A673 (cell line): ENCODE measurements at regions of chr3 and their contacts with region 1.

Region 1: GRCh38 chr3:19348929-19349564 is 200.7 kb downstream of the KCNH8 start:
- DNase-seq: peak; percentile 17
- H3K4me3 ChIP-seq: no peak overlapping the region
- H3K27ac ChIP-seq: no peak overlapping the region
- H3K4me1 ChIP-seq: no peaks in the 10 kb centered on the region
- H3K27me3 ChIP-seq: no peaks in the 10 kb centered on the region
- CTCF ChIP-seq: peak; percentile 72

Region 2: DNA sequence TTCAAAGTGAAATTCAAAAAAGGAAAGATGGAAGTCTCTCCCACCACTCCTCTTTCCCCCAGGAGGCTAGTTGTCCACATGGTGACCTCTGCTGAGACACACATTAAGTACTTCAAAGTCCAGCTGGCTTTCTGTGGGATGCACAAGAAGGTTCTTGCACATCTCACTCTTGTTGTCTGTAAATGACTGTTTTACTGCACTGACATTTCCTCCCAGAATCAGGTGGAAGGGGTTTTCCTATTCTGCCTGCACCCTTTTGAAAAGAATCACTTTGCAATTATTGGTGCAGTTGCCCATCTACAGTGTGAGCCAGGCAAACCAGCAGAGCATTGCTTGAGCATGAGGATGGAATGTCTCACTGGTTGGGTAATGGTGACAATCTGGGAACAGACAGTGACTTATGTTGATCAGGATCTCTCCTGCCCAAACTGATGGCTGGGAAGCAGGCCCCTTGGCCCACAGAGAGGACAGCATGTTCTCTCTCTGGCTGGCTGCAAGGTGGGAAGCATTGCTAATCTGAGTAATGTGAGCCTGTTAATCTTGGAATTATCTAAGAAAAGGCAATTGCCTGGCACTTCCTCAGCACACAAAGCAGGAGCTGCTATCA is 576.2 kb before region 1 on chr3:
- CTCF ChIA-PET with region 1: no interaction called
- POLR2A ChIA-PET with region 1: no interaction called
- intact Hi-C with region 1: no loop called
- DNase-seq: no peak
- H3K4me3 ChIP-seq: no peak overlapping the region
- H3K27ac ChIP-seq: no peak overlapping the region
- H3K4me1 ChIP-seq: no peaks in the 10 kb centered on the region
- H3K27me3 ChIP-seq: no peaks in the 10 kb centered on the region
- CTCF ChIP-seq: no peak

Region 3: DNA sequence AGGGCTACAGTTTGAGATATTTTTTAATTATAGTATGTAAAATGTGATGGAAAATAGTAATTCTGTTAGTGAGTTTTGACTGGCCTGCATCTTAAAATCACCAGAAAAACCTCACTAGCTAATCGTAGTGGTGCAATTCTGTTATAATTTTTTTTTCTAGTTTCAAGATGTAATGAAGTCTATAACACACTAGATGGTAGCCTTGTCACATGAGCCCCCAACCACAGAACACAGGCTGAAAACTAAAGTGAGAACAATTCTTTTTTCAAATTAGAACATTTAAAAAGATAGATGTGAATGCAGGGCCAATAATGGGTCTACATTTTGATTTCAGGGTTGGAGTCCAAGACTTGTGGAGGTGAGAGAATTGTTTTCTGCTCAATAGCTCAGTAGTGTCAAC is 284.0 kb before region 1 on chr3:
- CTCF ChIA-PET with region 1: no interaction called
- POLR2A ChIA-PET with region 1: no interaction called
- intact Hi-C with region 1: loop called (anchors 5 kb)
- DNase-seq: peak; percentile 3
- H3K4me3 ChIP-seq: no peak overlapping the region
- H3K27ac ChIP-seq: no peak overlapping the region
- H3K4me1 ChIP-seq: no peaks in the 10 kb centered on the region
- H3K27me3 ChIP-seq: no peaks in the 10 kb centered on the region
- CTCF ChIP-seq: peak; percentile 29; the same call in 1 of the 2 replicates

Region 4: GRCh38 chr3:19543212-19543841 is 194.3 kb after region 1 on chr3:
- CTCF ChIA-PET with region 1: no interaction called
- POLR2A ChIA-PET with region 1: no interaction called
- intact Hi-C with region 1: loop called (anchors 5 kb)
- DNase-seq: peak; percentile 13
- H3K4me3 ChIP-seq: no peak overlapping the region
- H3K27ac ChIP-seq: no peak overlapping the region
- H3K4me1 ChIP-seq: no peaks in the 10 kb centered on the region
- H3K27me3 ChIP-seq: no peaks in the 10 kb centered on the region
- CTCF ChIP-seq: peak; percentile 53